Caco-2 (cell line): ENCODE measurements at regions of chr13 and their contacts with region 1.

Region 1: DNA sequence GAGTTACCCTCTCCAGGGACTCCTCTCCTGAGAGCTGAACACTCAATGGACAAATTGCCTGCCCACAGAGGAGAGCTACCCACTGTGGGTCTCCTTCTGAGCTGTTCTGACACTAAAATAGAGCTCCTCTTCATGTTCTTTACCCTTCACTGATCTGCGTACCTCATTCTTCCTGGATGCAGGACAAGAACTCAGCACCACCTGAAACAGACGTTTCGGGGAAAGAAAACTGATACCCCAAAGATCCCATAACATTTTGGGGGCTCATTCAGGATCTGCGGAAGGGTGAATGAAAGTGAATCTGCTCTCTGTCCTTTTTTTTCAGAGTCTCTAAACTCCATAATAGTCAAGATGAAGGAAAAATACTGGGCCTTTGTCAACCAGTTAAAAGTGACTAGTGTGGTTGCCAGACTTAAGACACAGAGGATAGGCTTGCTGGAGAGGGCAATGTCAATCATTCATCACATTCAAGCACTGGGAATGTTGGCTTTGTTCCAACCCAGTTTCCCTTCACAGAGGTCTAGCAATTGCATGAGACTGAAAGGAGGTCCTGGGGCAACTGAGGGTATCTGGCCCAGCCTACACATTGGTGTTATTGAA is 136.7 kb upstream of the SLITRK6 start:
- DNase-seq: no peak
- H3K4me3 ChIP-seq: no peak overlapping the region
- H3K4me3 Mint-ChIP-seq: no peak overlapping the region
- H3K27ac Mint-ChIP-seq: no peak overlapping the region
- H3K4me1 ChIP-seq: no peaks in the 10 kb centered on the region
- H3K4me1 Mint-ChIP-seq: no peaks in the 10 kb centered on the region
- H3K27me3 ChIP-seq: no peaks in the 10 kb centered on the region
- H3K27me3 Mint-ChIP-seq: no peaks in the 10 kb centered on the region
- CTCF ChIP-seq: no peak

Region 2: GRCh38 chr13:85651440-85651839 is 284.5 kb before region 1 on chr13:
- CTCF ChIA-PET with region 1: no interaction called
- POLR2A ChIA-PET with region 1: no interaction called
- intact Hi-C with region 1: no loop called
- DNase-seq: no peak
- H3K4me3 ChIP-seq: no peak overlapping the region
- H3K4me3 Mint-ChIP-seq: no peak overlapping the region
- H3K27ac Mint-ChIP-seq: no peak overlapping the region
- H3K4me1 ChIP-seq: no peaks in the 10 kb centered on the region
- H3K4me1 Mint-ChIP-seq: no peaks in the 10 kb centered on the region
- H3K27me3 ChIP-seq: no peaks in the 10 kb centered on the region
- H3K27me3 Mint-ChIP-seq: no peaks in the 10 kb centered on the region
- CTCF ChIP-seq: no peak

Region 3: DNA sequence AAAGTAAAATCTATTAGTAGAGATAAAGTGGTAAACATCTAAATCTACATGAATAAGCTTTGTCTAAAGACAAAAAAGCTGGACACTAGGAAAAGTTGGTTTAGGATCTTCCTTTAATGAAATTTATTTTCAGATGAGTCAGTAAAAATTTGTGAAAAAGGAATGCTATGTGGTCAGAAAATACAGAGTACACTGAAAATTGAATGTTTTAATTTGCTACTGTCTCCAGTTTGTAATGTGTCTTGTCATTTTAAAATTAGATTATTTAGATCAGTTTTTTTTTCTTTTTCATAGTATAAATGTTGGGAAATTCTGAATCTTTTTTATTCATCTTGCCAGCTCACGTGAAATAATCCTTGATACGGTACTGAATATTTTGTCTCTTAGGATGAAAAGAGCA is 193.6 kb before region 1 on chr13:
- CTCF ChIA-PET with region 1: no interaction called
- POLR2A ChIA-PET with region 1: no interaction called
- intact Hi-C with region 1: loop called (anchors 10 kb)
- DNase-seq: no peak
- H3K4me3 ChIP-seq: no peak overlapping the region
- H3K4me3 Mint-ChIP-seq: no peak overlapping the region
- H3K27ac Mint-ChIP-seq: no peak overlapping the region
- H3K4me1 ChIP-seq: peaks cover 5% of the 10 kb centered on the region; the same call in 1 of the 2 replicates
- H3K4me1 Mint-ChIP-seq: peaks cover 6% of the 10 kb centered on the region
- H3K27me3 ChIP-seq: no peaks in the 10 kb centered on the region
- H3K27me3 Mint-ChIP-seq: no peaks in the 10 kb centered on the region
- CTCF ChIP-seq: no peak